ENCODE measurements at regions of chr7 and their contacts with region 1.

Region 1: GRCh38 chr7:13262929-13263530 is 575.6 kb downstream of the ARL4A start:
- DNase-seq: peak in 2 of 4 donors; percentile 18 to 55
- ATAC-seq: peak; percentile 70
- H3K4me3 ChIP-seq: no peak overlapping the region
- H3K27ac ChIP-seq: no peak overlapping the region
- H3K4me1 ChIP-seq: no peaks in the 10 kb centered on the region
- H3K27me3 ChIP-seq: no peaks in the 10 kb centered on the region
- CTCF ChIP-seq: peak; percentile 19 to 46

Region 2: DNA sequence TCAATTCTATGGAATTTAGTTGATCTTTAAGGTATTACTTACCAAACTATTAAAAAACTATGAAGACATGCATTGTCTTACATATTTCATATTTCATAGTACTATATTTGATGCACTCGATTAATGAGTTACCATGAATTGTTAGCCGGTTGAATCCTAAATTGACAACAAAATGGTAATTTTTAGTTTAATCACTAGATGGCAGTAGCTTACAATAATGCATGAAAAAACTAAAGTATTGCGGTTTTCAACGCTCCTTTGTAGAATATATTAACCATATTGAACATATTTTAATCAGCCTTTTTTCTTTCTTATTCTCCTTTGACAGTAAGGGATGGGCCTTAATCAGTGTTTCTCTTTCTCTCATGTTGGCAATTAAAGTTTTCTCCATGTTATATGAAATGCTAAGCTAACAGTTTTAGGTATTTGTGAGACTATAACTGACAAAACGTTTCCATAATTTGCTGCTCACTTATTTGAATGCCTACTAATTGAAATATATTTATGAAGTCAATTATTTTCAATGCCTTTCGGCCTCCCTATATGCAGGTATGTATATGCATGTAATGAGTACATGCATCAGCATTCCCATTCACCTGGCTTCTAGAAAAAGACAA is 624.1 kb before region 1 on chr7:
- intact Hi-C with region 1: loop called in 1 of 2 experiments (anchors 10 kb)
- DNase-seq: peak in 2 of 4 donors; percentile 15 to 24
- ATAC-seq: peak; percentile 79
- H3K4me3 ChIP-seq: no peak overlapping the region
- H3K27ac ChIP-seq: no peak overlapping the region
- H3K4me1 ChIP-seq: peaks cover 0 to 5% of the 10 kb centered on the region in 2 donors
- H3K27me3 ChIP-seq: no peaks in the 10 kb centered on the region
- CTCF ChIP-seq: peak; percentile 55 to 56

Region 3: DNA sequence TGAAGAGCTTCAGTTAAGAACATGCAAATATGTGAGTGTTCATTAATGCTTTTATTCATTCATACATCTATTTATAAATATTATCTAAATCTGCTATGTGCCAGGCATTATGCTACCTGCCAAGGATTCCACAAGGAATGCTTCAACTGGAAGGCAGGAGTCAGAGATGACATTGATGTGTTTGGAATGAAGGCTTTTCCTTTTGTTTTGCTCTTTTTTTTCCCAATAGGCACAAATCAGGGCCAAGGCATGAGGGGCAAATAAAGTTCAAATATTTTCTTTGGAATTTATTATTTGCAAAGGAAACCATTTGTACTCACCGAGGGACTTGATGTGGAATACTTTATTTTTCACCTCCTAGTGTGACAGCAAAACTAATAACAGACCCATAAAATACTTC is 45.3 kb before region 1 on chr7:
- intact Hi-C with region 1: no loop called
- DNase-seq: no peak
- ATAC-seq: no peak
- H3K4me3 ChIP-seq: no peak overlapping the region
- H3K27ac ChIP-seq: no peak overlapping the region
- H3K4me1 ChIP-seq: no peaks in the 10 kb centered on the region
- H3K27me3 ChIP-seq: no peaks in the 10 kb centered on the region
- CTCF ChIP-seq: no peak

Measured in left lung (tissue), 14 donors.